ENCODE measurements at regions of chr6 and their contacts with region 1.

Region 1: DNA sequence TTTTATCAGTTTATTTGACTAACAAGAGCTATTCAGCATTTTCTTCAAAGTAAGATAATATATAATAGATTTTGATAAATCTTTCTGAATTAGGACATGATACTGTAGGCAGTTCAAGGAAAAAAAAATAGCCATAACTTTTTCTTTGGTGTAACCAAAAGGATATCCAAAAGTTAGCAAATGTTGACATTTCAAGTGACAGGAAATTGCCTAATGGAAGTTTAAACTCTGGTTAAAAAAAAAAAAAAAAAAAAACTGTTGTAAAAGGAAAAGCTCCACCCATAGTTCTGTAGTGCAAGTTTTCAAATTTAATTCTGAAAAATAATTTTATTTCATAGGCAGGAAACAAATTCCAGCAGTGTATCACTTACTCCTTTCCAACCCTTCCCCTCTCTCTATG is 18.8 kb downstream of the HEBP2 start:
- DNase-seq: peak; percentile 38
- ATAC-seq: no peak; the same call in 2 of the 3 replicates
- H3K4me3 ChIP-seq: no peak overlapping the region
- H3K27ac ChIP-seq: no peak overlapping the region
- H3K4me1 ChIP-seq: peaks cover 36% of the 10 kb centered on the region
- H3K27me3 ChIP-seq: no peaks in the 10 kb centered on the region
- CTCF ChIP-seq: no peak
- EP300 ChIP-seq: peak in 1 of 2 experiments; percentile 57; a peak in 1 of 4 replicates
- POLR2A ChIP-seq: no peak
- RAD21 ChIP-seq: no peak

Region 2: DNA sequence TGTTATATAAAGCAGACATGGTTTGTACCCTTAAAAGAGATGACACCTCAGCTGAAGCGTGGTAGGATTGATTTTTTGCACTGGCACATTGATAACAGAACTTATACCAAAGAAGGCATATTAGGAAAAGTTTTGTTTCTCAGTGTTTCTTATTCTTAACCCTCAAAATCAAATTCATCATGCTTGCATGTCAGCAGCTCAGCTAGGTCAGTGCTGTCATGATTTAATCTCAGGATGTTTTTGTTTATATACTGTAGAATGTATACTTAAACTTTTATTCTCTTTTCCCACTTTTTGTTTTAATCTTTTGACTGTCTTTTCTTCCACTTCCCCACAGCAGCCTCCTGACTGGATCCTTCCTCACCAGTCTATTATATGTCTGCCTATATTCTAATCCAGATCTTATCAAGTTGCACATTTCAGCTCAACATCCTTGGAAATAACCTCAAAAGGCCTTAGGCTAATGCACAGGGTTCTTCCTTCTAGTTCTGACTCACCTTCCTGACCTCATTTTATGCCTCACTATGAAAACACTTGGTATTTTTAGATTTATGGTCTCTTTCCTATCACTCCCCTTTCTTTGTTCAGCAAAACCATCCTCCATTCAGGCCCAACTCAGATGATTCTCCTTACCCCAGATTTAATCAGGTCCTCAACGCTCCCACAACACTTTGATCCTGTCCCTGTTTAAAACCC is 11.7 kb before region 1 on chr6:
- CTCF ChIA-PET with region 1: no interaction called
- POLR2A ChIA-PET with region 1: no interaction called
- in situ Hi-C with region 1: no loop called
- intact Hi-C with region 1: no loop called
- DNase-seq: no peak
- ATAC-seq: no peak
- H3K4me3 ChIP-seq: no peak overlapping the region
- H3K27ac ChIP-seq: no peak overlapping the region
- H3K4me1 ChIP-seq: peaks cover 9% of the 10 kb centered on the region
- H3K27me3 ChIP-seq: no peaks in the 10 kb centered on the region
- CTCF ChIP-seq: no peak
- EP300 ChIP-seq: no peak
- POLR2A ChIP-seq: no peak
- RAD21 ChIP-seq: no peak

Region 3: GRCh38 chr6:138773177-138774091 is 350.6 kb after region 1 on chr6 and contains the start of gene CCDC28A:
- CTCF ChIA-PET with region 1: no interaction called
- POLR2A ChIA-PET with region 1: no interaction called
- in situ Hi-C with region 1: no loop called
- intact Hi-C with region 1: loop called (anchors 5 kb)
- DNase-seq: peak; percentile 97
- ATAC-seq: peak; percentile 96
- H3K4me3 ChIP-seq: peak within 1 kb of the TSS; percentile 71 to 97 (median 81)
- H3K27ac ChIP-seq: peak within 1 kb of the TSS; percentile 93
- H3K4me1 ChIP-seq: peaks cover 30% of the 10 kb centered on the region
- H3K27me3 ChIP-seq: no peaks in the 10 kb centered on the region; a peak in 1 of 5 replicates
- CTCF ChIP-seq: peak; percentile 15; the same call in 1 of the 2 replicates
- EP300 ChIP-seq: peak in 1 of 2 experiments; percentile 4; a peak in 1 of 4 replicates
- POLR2A ChIP-seq: peak; percentile 69 to 70
- RAD21 ChIP-seq: no peak
- total RNA-seq, gene CCDC28A: 15.8 and 22.8 TPM in 2 replicates